ENCODE measurements at regions of chr5 and their contacts with region 1.

Region 1: GRCh38 chr5:55440188-55440646 is 94.5 kb downstream of the PLPP1 start:
- DNase-seq: peak; percentile 29
- H3K4me3 Mint-ChIP-seq: no peak overlapping the region
- H3K27ac Mint-ChIP-seq: no peak overlapping the region
- H3K4me1 Mint-ChIP-seq: peaks cover 44% of the 10 kb centered on the region
- H3K27me3 Mint-ChIP-seq: no peaks in the 10 kb centered on the region

Region 2: DNA sequence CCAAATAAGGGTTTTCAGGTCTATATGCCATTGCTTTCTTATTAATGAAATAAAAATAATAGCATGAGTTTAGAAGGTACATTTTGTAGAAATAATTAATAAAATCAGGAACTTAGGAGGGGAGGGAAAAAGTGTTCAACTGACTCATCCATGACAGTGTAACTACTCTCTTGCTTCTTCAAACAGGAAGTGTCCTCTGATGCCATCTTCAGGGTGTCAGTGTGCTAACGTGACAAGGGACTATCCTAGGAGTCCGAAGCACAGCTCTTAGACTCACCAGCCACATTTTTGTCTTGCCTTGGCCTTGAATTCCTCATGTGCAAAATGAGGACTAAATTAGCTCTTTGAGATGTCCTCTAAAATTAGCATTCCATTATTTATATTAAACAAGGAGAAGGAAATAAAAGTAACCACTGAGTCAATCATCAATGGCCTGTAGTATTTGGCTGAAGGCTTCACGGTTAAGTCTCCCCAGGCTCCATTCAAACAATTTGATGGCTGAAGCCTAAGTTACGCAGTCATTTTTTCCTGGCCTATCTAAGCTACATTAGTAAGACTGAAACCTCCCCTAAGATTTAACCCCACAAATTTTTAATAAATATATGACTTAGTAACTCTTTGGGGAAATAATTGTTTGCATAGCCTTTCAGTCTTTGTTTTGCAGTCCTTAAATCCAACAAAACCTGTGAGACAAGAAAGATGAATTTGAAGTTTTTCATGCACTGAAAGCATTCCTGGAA is 1280.9 kb before region 1 on chr5:
- CTCF ChIA-PET with region 1: no interaction called
- intact Hi-C with region 1: no loop called
- DNase-seq: no peak
- H3K4me3 Mint-ChIP-seq: no peak overlapping the region
- H3K27ac Mint-ChIP-seq: no peak overlapping the region
- H3K4me1 Mint-ChIP-seq: no peaks in the 10 kb centered on the region
- H3K27me3 Mint-ChIP-seq: no peaks in the 10 kb centered on the region

Region 3: DNA sequence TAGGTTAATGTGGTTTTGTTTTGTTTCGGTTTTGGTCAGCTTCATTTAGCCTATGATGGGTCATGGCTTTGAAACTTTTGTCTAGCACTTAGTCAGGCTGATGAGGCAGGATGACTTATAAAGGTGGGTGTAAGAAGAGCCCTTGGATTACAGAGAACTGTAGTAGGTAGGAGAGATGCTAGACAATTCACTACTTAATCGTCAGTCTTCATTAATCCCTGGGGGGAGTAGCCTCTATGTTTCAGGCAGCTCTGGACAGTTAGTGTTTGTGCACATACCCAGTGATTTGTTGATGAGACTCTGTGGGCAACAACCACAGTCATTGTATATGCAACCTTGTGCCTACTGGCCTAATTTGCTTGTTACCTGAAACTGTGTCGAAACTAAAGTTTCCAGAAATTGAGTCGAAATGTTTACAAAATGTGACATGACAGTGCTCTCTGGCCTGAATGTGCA is 19.1 kb before region 1 on chr5:
- CTCF ChIA-PET with region 1: no interaction called
- intact Hi-C with region 1: loop called (anchors 1 kb)
- DNase-seq: peak; percentile 49
- H3K4me3 Mint-ChIP-seq: no peak overlapping the region
- H3K27ac Mint-ChIP-seq: no peak overlapping the region
- H3K4me1 Mint-ChIP-seq: peaks cover 33% of the 10 kb centered on the region
- H3K27me3 Mint-ChIP-seq: no peaks in the 10 kb centered on the region

Region 4: GRCh38 chr5:55540024-55540423 is 99.8 kb after region 1 on chr5:
- CTCF ChIA-PET with region 1: no interaction called
- intact Hi-C with region 1: loop called (anchors 2 kb)
- DNase-seq: no peak
- H3K4me3 Mint-ChIP-seq: no peak overlapping the region
- H3K27ac Mint-ChIP-seq: no peak overlapping the region
- H3K4me1 Mint-ChIP-seq: peaks cover 39% of the 10 kb centered on the region
- H3K27me3 Mint-ChIP-seq: no peaks in the 10 kb centered on the region

Region 5: DNA sequence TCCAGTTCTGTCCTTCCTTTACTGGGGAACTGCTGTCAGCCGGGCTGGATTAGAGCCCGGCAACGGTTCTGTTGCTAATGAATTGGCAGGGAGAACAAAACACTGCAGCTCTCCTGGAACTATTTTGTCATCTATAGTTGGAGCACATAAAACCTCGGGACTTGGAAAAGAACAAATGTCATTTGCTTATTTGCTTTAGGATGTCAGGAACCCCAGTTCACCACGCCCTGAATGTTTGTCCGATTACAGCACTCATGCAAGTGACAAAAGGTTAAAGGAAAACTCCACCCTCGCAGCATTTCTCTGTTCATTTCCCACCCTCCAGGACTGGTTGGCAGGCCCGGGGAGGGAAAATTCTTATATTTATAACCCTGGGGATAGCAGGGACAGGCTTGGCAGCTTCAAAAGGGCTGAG is 161.0 kb after region 1 on chr5:
- CTCF ChIA-PET with region 1: no interaction called
- intact Hi-C with region 1: loop called (anchors 5 kb)
- DNase-seq: peak; percentile 23
- H3K4me3 Mint-ChIP-seq: peak overlapping the region; percentile 34
- H3K27ac Mint-ChIP-seq: no peak overlapping the region
- H3K4me1 Mint-ChIP-seq: peaks cover 24% of the 10 kb centered on the region
- H3K27me3 Mint-ChIP-seq: no peaks in the 10 kb centered on the region

Region 6: DNA sequence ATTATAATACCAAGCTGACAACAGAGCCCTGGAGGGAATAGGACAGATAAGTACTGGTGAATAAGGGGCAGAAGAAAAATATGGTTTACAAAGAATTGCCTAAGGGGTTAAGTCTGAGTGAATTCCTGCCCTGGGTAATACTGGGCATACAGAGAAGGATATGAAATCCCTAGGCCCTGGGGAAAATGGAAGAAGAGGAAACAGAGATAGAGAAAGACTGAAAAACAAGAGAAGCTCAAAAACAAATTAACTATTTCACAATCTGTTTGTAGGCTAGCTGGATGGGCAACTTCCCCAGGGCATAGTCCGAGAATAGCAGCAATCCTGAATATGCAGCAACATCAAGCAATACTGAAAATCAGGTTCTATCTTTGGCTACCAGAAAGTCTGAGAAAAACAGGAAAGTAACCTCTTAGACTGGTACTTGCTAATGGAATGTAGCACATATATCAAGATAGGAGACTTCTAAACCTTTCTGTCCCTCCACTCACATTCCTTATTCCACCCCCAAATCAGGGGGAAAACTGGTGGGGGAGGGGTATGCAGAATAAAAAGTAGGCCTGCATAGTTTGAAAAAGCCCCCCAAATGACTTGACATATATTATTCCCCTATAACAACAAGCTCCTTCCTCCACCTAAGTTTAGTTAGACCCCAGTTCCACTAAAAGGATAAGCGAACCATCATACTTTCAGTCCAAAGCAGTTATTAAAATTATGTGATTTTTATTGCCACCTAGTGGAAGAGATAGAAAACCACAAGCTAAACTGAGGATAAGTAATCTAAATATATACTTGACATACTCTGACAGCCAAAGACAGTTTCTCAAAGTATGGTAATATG is 251.3 kb after region 1 on chr5:
- CTCF ChIA-PET with region 1: interaction called, 8 read pairs
- intact Hi-C with region 1: loop called (anchors 1 kb)
- DNase-seq: no peak
- H3K4me3 Mint-ChIP-seq: no peak overlapping the region
- H3K27ac Mint-ChIP-seq: no peak overlapping the region
- H3K4me1 Mint-ChIP-seq: peaks cover 3% of the 10 kb centered on the region
- H3K27me3 Mint-ChIP-seq: no peaks in the 10 kb centered on the region

Region 7: DNA sequence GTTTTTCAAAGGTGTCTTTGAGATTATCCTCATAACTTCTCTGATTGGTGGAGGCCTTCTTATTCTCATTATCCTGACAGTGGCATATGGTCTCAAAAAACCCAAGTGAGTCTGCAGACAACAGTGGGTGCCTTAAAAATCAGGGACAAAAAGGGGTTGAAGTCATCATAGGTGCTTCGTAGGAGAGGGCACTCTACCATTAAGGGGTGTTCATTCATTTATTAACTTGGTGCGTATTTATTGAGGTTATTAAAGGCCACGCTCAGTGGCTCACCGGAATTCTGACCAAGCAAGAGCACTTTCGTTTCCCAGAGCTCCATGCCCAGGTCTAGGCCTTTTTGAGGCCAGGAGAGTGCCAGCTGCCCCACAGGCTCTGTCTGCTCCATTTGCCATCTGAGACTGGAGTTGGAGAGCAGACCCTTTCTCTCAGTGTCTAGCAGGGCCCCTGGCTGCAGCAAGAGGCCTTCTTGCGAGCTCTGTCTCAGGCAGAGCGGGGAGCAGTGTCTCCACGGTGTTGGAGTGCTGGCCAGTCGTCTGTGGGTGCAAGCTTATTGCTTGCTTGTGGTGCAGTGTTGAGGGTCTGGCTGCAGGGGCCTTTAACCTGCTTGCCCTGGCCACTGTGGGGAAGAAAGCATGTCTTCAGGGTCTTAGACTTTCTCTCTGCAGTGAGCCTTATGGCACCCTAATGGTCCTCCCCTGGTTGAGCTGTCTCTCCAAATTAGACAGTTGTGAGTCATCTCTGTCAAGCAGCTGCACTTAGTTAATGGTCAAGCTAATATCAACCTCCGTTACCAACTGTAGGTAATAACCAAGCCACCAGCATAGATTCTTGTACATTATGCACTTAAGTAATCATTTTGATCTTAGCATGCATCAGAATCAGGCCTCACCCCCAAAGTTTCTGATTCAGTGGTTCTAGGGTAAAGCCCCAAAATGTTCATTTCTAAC is 473.5 kb after region 1 on chr5:
- CTCF ChIA-PET with region 1: no interaction called
- intact Hi-C with region 1: loop called (anchors 10 kb)
- DNase-seq: no peak
- H3K4me3 Mint-ChIP-seq: no peak overlapping the region
- H3K27ac Mint-ChIP-seq: no peak overlapping the region
- H3K4me1 Mint-ChIP-seq: peaks cover 18% of the 10 kb centered on the region
- H3K27me3 Mint-ChIP-seq: no peaks in the 10 kb centered on the region